ENCODE measurements at regions of chr16 and their contacts with region 1.

Region 1: GRCh38 chr16:20084624-20085211 is 11.0 kb upstream of the GPR139 start:
- DNase-seq: no peak
- ATAC-seq: peak; percentile 72; the same call in 1 of the 2 replicates
- H3K4me3 ChIP-seq: no peak overlapping the region
- H3K27ac ChIP-seq: no peak overlapping the region
- H3K4me1 ChIP-seq: no peaks in the 10 kb centered on the region
- H3K27me3 ChIP-seq: peaks cover 8% of the 10 kb centered on the region
- CTCF ChIP-seq: no peak

Region 2: DNA sequence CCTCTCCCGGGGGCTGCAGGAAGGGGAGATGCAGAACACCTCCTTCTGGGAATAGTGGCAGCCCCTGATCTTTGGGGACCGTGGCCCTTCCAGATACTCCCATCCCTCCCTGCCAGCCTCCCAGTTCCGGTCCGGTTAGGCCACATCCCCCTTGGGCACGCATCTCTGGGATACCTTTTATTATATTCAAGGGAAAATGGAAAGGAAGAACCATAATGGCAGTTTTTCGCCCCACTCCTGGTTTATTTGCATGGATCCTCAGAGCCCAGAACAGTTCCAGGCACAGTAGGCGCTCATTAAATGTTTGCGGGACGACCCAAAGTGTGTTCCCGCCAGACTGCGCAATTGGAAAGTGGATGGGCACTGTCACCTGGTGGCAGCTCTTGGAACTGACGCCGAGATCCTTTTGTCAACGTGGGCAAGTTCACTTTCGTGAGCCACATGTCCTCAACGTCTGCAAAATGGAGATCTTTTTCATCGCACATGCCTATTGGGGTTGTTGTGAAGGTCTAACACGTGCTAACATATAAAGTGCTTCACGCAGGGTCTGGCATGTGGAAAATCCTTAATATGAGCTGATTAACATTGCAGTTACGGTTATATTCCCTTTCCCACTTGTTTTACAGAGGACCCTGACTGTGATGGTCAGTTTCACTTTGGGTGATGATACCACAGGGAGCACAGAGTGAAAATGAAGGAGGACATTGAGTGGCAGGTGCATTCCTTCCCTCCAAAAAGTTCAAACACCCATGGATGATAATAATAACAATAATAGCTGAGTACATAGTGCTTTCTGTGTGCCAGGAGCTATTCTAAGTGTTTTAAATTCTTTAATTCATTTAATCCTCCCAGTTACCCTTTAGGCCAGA is 198.4 kb before region 1 on chr16:
- CTCF ChIA-PET with region 1: no interaction called
- POLR2A ChIA-PET with region 1: no interaction called
- in situ Hi-C with region 1: no loop called
- intact Hi-C with region 1: no loop called
- DNase-seq: peak; percentile 88
- ATAC-seq: peak; percentile 68
- H3K4me3 ChIP-seq: peak overlapping the region in 1 of 2 experiments; percentile 78; a peak in 2 of 4 replicates
- H3K27ac ChIP-seq: peak overlapping the region; percentile 12; the same call in 1 of the 2 replicates
- H3K4me1 ChIP-seq: peaks cover 23% of the 10 kb centered on the region
- H3K27me3 ChIP-seq: no peaks in the 10 kb centered on the region
- CTCF ChIP-seq: peak; percentile 100

Region 3: DNA sequence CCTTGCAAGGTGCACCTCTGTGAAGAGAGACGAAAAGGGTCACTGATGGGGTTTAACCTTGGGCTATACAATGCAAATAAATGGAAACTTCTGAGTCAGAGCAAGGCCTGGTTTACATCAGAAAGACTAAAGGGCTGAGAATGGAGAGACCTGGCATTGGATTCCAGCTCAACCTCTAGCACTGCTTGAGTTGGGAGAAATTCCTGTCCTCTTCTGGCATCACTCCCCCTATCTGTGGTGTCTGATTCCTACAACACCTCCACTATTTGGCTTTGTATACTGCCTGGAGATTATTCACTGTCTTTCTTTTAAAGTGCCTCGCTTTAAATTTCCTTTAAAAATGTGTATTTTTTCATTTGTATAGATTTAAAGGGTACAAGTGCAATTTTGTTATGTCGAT is 79.8 kb before region 1 on chr16:
- CTCF ChIA-PET with region 1: no interaction called
- POLR2A ChIA-PET with region 1: no interaction called
- in situ Hi-C with region 1: no loop called
- intact Hi-C with region 1: no loop called
- DNase-seq: no peak
- ATAC-seq: peak; percentile 45; the same call in 1 of the 2 replicates
- H3K4me3 ChIP-seq: no peak overlapping the region
- H3K27ac ChIP-seq: no peak overlapping the region
- H3K4me1 ChIP-seq: no peaks in the 10 kb centered on the region
- H3K27me3 ChIP-seq: peaks cover 34% of the 10 kb centered on the region
- CTCF ChIP-seq: peak; percentile 28; the same call in 1 of the 2 replicates

Region 4: DNA sequence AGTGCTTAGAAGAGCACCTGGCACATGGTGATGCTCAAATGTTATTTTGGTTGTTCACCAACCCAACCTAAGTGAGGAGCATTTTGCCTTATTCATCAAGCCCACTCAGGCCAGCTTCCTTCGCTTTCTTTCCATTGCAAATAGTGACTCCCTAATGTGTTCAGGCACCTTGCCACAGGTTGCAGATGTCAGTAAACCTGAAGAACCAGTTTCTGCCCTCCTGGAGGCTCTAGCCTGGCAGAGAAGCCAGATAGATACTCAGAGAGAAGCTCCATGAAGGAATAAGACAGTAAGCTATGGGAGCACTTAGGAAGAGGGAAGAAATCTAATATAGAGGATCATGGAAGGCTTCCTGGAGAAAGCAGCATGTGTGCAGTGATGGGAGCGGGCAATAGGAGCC is 34.9 kb before region 1 on chr16:
- CTCF ChIA-PET with region 1: no interaction called
- POLR2A ChIA-PET with region 1: no interaction called
- in situ Hi-C with region 1: no loop called
- intact Hi-C with region 1: loop called (anchors 2 kb)
- DNase-seq: no peak
- ATAC-seq: no peak
- H3K4me3 ChIP-seq: no peak overlapping the region
- H3K27ac ChIP-seq: no peak overlapping the region
- H3K4me1 ChIP-seq: no peaks in the 10 kb centered on the region
- H3K27me3 ChIP-seq: peaks cover 34% of the 10 kb centered on the region
- CTCF ChIP-seq: no peak

Region 5: GRCh38 chr16:20064931-20065330 is 19.8 kb before region 1 on chr16:
- CTCF ChIA-PET with region 1: no interaction called
- POLR2A ChIA-PET with region 1: no interaction called
- in situ Hi-C with region 1: no loop called
- intact Hi-C with region 1: loop called (anchors 2 kb)
- DNase-seq: no peak
- ATAC-seq: no peak
- H3K4me3 ChIP-seq: no peak overlapping the region
- H3K27ac ChIP-seq: no peak overlapping the region
- H3K4me1 ChIP-seq: no peaks in the 10 kb centered on the region
- H3K27me3 ChIP-seq: peaks cover 13% of the 10 kb centered on the region; the same call in 1 of the 2 replicates
- CTCF ChIP-seq: no peak

Region 6: GRCh38 chr16:20107095-20107494 is 22.4 kb after region 1 on chr16:
- CTCF ChIA-PET with region 1: no interaction called
- POLR2A ChIA-PET with region 1: no interaction called
- in situ Hi-C with region 1: no loop called
- intact Hi-C with region 1: no loop called
- DNase-seq: no peak
- ATAC-seq: no peak
- H3K4me3 ChIP-seq: no peak overlapping the region
- H3K27ac ChIP-seq: no peak overlapping the region
- H3K4me1 ChIP-seq: no peaks in the 10 kb centered on the region
- H3K27me3 ChIP-seq: peaks cover 18% of the 10 kb centered on the region
- CTCF ChIP-seq: no peak

Region 7: GRCh38 chr16:20166531-20167235 is 82.0 kb after region 1 on chr16:
- CTCF ChIA-PET with region 1: no interaction called
- POLR2A ChIA-PET with region 1: no interaction called
- in situ Hi-C with region 1: no loop called
- intact Hi-C with region 1: no loop called
- DNase-seq: no peak
- ATAC-seq: peak; percentile 71; the same call in 1 of the 2 replicates
- H3K4me3 ChIP-seq: no peak overlapping the region
- H3K27ac ChIP-seq: no peak overlapping the region
- H3K4me1 ChIP-seq: no peaks in the 10 kb centered on the region
- H3K27me3 ChIP-seq: peaks cover 42% of the 10 kb centered on the region
- CTCF ChIP-seq: no peak

Measured in Panc1 (cell line).